Lower leg skin (tissue), 4 donors: ENCODE measurements at regions of chr9 and their contacts with region 1.

Region 1: GRCh38 chr9:112119225-112120029 is 55.7 kb downstream of the SUSD1 start:
- DNase-seq: peak in 1 of 2 donors; percentile 8
- H3K4me3 ChIP-seq: no peak overlapping the region
- CTCF ChIP-seq: no peak
- POLR2A ChIP-seq: no peak

Region 2: DNA sequence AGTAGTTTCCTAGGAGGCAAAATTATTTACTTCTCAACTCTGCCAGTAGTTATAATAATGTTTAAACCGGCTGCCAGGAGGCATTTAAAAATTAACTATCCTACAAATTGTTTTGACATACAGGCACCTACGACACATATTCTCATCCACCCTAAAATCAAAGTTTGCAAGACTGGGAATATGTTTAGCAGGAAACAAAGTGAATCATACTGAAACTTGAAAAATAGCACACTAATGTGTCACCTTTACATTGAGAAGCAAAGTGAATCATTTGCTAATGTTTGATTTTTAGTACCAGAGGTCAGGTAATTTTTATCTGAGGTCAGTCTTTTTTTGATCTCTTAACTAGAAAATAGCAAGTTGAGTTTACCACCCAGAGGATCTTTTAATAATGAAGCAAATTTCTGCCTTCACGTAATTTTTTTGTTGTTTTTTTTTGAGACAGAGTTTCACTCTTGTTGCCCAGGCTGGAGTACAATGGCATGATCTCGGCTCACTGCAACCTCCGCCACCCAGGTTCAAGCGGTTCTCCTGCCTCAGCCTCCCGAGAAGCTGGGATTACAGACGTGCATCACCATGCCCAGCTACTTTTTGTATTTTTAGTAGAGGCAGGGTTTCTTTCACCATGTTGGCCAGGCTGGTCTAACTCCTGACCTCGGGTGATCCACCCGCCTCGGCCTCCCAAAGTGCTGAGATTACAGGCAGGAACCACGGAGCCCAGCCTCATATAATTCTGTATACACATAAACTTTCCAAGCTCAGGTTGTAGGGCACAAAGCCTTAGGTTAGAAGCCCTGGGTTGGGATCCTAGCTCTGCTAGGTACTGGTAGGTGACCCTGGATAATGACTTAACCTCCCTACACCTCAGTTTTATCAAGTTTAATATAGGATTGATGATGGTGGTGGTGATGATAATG is 98.5 kb before region 1 on chr9:
- intact Hi-C with region 1: no loop called
- DNase-seq: no peak
- H3K4me3 ChIP-seq: no peak overlapping the region
- CTCF ChIP-seq: no peak
- POLR2A ChIP-seq: no peak

Region 3: DNA sequence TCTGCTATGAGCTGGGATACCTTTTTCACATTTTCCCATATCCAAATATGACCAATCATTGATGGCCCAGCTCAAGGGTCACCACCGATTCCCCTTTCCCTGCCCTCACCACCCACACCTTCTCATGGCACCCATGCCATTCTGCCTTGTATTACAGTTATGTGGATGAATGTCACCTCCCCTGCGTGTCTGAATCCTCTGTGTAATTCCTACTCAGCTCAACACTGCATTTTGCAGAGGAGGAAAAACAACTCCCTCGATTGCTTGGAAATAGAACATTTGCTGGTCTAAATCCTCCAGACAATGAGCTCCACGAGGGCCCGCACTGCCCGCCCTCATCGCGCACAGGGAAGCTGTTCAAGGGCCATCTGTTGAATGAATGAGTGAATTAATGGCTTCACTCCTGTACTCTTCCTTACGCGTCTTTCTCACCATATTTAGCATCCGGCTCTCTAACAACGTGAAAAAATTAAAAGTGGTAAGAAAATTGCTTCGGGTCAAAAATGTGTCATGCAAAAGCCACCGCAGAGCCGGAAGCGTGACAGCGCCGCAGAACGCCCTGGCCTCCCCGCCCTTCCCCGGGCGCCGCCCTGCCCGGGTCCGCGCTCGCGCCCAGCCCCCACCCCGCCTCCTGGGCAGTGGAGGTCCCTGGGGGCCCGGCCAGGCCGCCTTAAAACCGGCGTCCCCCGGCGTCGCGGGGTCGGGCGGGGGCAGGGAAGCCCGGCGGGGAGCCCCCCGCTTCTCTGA is 55.0 kb after region 1 on chr9:
- intact Hi-C with region 1: no loop called
- DNase-seq: peak; percentile 29 to 89
- H3K4me3 ChIP-seq: peak overlapping the region; percentile 42
- CTCF ChIP-seq: no peak
- POLR2A ChIP-seq: no peak

Region 4: DNA sequence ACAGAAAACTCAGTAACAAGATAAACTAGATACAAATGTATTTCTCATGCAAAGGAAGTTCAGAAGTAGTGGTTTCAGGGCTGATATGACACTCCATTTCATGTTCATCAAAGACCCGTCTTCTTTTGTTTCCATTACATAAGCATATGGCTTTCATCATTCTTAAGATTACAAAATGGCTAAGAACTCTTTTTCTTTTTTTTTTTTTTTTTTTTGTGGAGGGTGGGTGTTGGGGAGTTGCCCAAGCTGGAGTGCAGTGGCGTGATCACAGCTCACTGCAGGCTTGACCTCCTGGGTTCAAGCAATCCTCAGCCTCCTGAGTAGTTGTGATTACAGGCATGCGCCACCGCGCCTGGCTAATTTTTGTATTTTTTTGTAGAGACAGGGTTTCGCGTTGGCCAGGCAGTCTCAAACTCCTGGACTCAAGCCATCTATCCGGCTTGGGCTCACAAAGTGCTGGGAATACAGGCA is 236.0 kb after region 1 on chr9:
- intact Hi-C with region 1: loop called (anchors 5 kb)
- DNase-seq: no peak
- H3K4me3 ChIP-seq: no peak overlapping the region
- CTCF ChIP-seq: no peak
- POLR2A ChIP-seq: no peak